ENCODE measurements at regions of chr5 and their contacts with region 1.

Region 1: GRCh38 chr5:177454397-177455035 is 7.9 kb downstream of the PRR7 start:
- DNase-seq: peak; percentile 98
- H3K4me3 Mint-ChIP-seq: peak overlapping the region; percentile 85
- H3K27ac Mint-ChIP-seq: no peak overlapping the region
- H3K4me1 Mint-ChIP-seq: peaks cover 10% of the 10 kb centered on the region
- H3K27me3 Mint-ChIP-seq: peaks cover 18% of the 10 kb centered on the region

Region 2: DNA sequence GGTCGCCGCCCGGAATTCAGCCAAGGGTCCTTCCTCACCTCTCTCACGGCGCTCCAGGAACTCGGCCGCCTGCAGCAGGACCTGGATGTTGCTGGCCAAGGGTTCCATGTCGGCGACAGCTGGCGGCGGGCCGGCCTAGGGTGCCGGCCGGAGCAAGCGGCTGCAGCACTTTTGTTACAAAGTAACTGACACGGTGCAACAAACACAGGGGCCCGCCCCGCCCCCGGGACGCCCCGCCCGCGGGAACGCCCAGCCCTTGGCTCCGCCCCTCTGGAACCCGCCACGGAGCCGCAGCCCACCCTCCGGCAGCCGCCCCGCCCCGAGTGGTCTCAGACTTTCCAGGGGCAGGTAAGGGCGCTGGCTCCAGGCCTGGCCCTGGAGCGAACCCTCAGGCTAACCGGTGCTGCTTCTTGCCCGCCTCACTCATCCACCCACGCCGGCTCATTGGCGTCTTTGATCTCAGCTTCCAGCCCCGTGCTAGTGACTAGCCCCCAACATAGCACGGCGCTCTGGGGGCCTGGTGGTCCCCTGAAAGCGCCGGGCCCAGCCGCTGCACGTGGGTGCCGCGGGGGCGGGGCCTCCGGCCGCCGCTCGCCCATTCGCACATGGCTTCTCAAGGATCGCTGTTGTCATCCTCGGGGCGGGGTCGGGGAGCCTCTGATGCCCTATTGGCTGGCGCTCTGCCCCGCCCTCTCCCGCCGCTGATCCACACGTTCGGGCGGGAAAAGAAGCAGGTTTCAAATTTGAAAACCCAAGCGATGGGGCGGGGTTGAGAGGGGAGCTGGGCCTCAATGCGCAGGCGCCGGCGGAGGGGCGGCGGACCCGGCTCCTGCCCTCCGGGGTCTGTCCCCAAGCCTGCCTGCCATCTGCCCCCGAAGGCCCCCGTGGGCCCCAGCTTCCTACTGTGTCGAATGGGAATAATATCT is 142.5 kb before region 1 on chr5 and contains the start of gene MXD3:
- intact Hi-C with region 1: loop called (anchors 2 kb)
- DNase-seq: peak; percentile 99
- H3K4me3 Mint-ChIP-seq: peak within 1 kb of the TSS; percentile 85
- H3K27ac Mint-ChIP-seq: peak within 1 kb of the TSS; percentile 93
- H3K4me1 Mint-ChIP-seq: peaks cover 31% of the 10 kb centered on the region
- H3K27me3 Mint-ChIP-seq: no peaks in the 10 kb centered on the region
- total RNA-seq, gene MXD3: 9.1 and 11.7 TPM in 2 replicates

Region 3: DNA sequence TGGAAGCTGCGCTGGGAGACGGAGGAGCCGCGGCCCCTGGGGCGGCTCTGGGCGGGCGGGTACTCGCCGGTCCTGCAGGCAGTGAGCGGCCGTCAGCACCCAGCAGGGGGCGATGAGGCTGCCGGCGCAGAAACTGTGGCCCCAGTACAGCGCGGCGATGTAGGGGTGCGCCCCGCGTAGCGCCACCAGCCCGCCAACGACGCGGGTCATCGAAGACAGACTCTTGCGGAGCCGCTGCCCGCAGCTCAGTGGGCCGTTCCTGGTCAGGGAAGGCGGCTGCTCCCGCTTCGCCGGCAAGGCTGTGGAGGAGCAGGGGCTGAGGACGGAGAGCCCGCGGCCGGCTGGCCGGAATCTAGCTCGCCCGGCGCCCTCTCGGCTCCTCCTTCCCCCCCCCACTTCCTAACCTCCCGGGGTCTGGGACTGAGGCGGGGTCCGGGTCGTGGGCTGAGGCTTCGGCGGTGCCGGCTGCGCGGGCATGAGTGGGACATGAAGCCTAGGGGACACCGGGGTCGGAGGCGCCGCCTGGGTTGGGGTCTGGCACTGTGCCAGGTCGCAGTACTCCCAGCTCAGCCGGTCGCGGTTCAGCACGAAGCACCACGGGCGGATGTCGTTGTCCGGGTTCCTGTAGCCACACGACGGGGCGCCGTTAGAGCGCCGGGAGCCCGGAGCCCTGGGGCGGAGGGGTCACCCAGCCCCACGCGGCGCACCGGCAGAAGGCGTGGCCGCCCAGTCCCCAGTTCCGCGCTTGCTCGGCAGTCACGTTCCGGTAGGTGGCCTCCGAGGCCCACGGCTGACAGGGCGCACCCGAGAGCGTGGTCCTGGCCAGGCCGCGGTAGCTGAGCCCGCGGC is 50.5 kb before region 1 on chr5:
- intact Hi-C with region 1: loop called (anchors 1 kb)
- DNase-seq: peak; percentile 95
- H3K4me3 Mint-ChIP-seq: peak overlapping the region; percentile 88
- H3K27ac Mint-ChIP-seq: peak overlapping the region; percentile 67
- H3K4me1 Mint-ChIP-seq: peaks cover 17% of the 10 kb centered on the region
- H3K27me3 Mint-ChIP-seq: peaks cover 33% of the 10 kb centered on the region

Region 4: DNA sequence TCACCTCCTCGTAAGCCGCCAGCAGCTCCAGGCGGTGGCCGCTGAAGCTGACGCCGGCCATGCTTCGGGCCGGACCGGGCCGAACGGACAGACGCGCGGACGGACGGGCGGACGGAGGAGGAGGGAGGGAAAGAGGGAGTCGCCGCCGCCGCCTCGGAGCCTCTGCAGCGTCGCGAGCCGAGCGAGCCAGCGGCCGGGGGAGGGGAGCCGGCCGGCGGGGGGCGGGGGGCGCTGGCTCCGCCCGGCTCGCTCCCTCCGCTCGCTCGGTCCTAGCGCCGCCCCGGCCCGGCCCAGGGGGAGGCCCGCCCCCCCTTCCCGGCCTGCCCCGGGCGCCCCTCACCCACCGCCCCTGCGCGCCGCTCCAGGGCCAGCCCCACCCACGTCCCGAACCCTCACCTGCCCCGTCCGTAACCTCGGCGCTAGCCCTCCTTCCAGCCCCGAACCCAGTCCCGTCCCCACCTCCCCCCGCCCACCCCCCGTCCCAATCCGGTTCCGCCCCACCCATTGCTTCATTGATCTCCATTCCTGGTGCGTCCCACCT is 19.0 kb after region 1 on chr5 and contains the start of gene DBN1:
- intact Hi-C with region 1: loop called (anchors 2 kb)
- DNase-seq: peak; percentile 70
- H3K4me3 Mint-ChIP-seq: peak within 1 kb of the TSS; percentile 85
- H3K27ac Mint-ChIP-seq: peak within 1 kb of the TSS; percentile 84
- H3K4me1 Mint-ChIP-seq: peaks cover 30% of the 10 kb centered on the region
- H3K27me3 Mint-ChIP-seq: peaks cover 8% of the 10 kb centered on the region
- total RNA-seq, gene DBN1: 22.0 and 23.5 TPM in 2 replicates

Measured in activated CD4-positive, alpha-beta T cell treated with anti-CD3 and anti-CD28 coated beads, Interleukin-2, amount 10 ng/mL, durations not matched to agents 24 days and 14 days (primary cell).